ENCODE measurements at regions of chr3 and their contacts with region 1.

Region 1: DNA sequence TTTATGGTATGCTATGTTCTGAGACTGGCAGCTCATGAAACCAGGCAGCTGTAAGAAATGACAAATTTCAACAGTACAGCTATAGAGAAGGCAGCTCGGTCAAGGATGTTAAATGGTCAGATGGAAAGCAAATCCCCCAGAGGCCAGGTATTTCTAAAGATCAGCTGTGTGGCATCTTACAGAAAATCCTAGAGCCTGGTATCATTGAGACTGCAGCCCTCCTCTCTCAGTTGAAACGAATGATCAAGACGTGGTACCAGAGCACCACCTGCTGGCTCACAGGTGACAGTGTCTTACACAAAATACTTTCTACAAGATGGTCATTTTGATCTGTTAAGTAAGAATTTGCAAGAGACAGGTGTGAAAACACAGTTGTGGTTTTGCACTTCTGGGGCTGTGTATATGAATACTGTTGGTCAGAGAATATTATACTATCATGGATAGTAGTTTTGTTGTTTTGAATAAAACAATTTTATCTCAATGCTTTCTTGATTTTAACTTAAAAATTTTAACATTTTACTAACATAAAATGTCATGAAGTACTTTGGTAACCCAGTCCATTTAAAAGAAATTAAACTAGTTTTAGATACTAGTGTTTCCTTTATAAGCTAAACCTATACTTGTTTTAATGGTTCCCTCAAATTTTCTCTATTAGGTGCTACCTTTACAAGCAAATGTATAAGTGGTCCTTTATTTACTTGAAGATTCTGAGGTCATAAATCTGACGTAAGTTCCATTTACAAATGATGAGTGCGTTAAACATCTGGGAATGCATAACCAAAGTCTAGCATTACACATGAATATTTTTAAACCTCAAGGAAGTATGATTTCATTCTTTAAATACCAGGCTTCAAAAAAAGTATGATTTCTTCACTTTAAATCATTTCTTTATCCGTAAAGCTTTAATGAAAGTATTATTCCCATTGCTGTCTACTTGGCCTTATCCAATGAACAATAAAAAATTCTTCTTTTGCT is 121.8 kb downstream of the PDZRN3 start:
- DNase-seq: peak; percentile 56
- ATAC-seq: peak; percentile 81
- H3K4me3 ChIP-seq: no peak overlapping the region
- H3K27ac ChIP-seq: no peak overlapping the region
- H3K4me1 ChIP-seq: no peaks in the 10 kb centered on the region
- H3K27me3 ChIP-seq: peaks cover 8% of the 10 kb centered on the region; the same call in 1 of the 2 replicates
- CTCF ChIP-seq: peak; percentile 56 to 84 (median 70); a peak in 5 of 6 replicates
- POLR2A ChIP-seq: no peak
- RAD21 ChIP-seq: peak; percentile 76

Region 2: DNA sequence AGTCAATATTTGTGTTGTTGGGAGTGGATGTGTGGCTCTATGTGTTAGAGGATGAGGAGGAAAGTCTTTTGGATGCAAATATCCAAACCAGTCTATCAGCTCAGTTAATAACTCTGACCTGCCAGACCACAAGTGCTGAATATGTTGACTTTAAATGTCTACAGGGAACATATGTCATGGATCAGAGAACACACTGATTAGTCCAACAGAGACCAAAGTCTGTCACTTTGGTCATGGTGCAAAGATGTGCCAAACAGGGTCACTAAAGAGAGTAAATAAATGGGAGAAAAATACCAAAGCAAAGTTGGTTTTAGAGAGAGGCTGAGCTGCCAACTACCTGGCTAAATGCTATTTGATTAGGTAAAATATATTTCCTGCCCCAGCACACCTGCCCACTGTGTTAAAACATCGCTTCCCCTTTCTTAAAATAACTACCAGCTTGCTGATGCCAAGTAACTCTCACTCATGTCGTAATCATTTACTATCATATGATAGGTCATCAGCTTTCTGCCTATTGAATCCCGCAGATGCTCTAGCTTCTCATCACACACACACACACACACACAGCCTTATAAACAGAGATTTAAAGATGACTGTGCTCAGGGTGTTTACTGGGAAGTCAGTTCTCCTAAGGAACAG is 51.5 kb before region 1 on chr3:
- CTCF ChIA-PET with region 1: no interaction called
- POLR2A ChIA-PET with region 1: no interaction called
- RAD21 ChIA-PET with region 1: no interaction called
- intact Hi-C with region 1: loop called (anchors 1 kb)
- DNase-seq: no peak
- ATAC-seq: no peak
- H3K4me3 ChIP-seq: no peak overlapping the region
- H3K27ac ChIP-seq: no peak overlapping the region
- H3K4me1 ChIP-seq: no peaks in the 10 kb centered on the region
- H3K27me3 ChIP-seq: peaks cover 13% of the 10 kb centered on the region
- CTCF ChIP-seq: no peak
- POLR2A ChIP-seq: no peak
- RAD21 ChIP-seq: no peak

Measured in HCT116 (cell line).